Activated T-helper 2 cell treated with anti-CD3 and anti-CD28 coated beads, Interferon-gamma antibody, Interleukin-2, Interleukin-4, amounts not matched to agents 10 μg/mL and 5 μg/mL and 100 μg/mL, durations not matched to agents 14 hours and 24 hours and 36 hours (primary cell): ENCODE measurements at regions of chr17 and their contacts with region 1.

Region 1: GRCh38 chr17:39225959-39226683 is 376 bp upstream of the STAC2 start:
- DNase-seq: no peak
- H3K4me3 Mint-ChIP-seq: peak overlapping the region; percentile 37
- H3K27ac Mint-ChIP-seq: no peak overlapping the region
- H3K4me1 Mint-ChIP-seq: peaks cover 3% of the 10 kb centered on the region
- H3K27me3 Mint-ChIP-seq: peaks cover 46% of the 10 kb centered on the region

Region 2: DNA sequence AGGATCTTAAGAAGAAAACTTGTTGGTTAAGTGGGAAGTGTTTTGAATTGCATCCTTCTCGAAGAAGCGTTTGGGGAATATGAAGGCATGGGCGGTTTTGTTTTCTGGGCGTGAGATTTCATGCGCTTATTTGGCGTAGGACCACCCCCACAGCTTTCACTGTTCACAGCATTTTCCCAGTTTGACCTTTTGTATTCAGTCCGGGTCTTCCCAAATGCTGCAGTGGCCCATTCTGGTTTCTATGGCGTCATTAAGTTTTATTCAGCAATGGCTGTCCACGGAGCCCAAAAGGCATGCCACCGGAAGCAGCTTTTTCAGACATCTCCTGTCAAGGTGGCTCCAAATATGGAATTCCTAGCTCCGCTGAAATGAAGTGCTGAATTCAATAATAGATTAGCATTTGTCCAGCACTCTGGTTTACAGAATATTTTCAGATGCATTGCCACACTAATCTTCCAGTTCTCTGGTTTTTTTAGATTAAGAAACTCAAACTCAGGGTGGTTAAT is 168.4 kb before region 1 on chr17:
- intact Hi-C with region 1: no loop called
- DNase-seq: no peak
- H3K4me3 Mint-ChIP-seq: peak overlapping the region; percentile 75
- H3K27ac Mint-ChIP-seq: no peak overlapping the region
- H3K4me1 Mint-ChIP-seq: peaks cover 12% of the 10 kb centered on the region
- H3K27me3 Mint-ChIP-seq: peaks cover 6% of the 10 kb centered on the region

Region 3: GRCh38 chr17:39069114-39069756 is 156.9 kb before region 1 on chr17:
- intact Hi-C with region 1: no loop called
- DNase-seq: no peak
- H3K4me3 Mint-ChIP-seq: no peak overlapping the region
- H3K27ac Mint-ChIP-seq: no peak overlapping the region
- H3K4me1 Mint-ChIP-seq: peaks cover 10% of the 10 kb centered on the region
- H3K27me3 Mint-ChIP-seq: peaks cover 2% of the 10 kb centered on the region

Region 4: DNA sequence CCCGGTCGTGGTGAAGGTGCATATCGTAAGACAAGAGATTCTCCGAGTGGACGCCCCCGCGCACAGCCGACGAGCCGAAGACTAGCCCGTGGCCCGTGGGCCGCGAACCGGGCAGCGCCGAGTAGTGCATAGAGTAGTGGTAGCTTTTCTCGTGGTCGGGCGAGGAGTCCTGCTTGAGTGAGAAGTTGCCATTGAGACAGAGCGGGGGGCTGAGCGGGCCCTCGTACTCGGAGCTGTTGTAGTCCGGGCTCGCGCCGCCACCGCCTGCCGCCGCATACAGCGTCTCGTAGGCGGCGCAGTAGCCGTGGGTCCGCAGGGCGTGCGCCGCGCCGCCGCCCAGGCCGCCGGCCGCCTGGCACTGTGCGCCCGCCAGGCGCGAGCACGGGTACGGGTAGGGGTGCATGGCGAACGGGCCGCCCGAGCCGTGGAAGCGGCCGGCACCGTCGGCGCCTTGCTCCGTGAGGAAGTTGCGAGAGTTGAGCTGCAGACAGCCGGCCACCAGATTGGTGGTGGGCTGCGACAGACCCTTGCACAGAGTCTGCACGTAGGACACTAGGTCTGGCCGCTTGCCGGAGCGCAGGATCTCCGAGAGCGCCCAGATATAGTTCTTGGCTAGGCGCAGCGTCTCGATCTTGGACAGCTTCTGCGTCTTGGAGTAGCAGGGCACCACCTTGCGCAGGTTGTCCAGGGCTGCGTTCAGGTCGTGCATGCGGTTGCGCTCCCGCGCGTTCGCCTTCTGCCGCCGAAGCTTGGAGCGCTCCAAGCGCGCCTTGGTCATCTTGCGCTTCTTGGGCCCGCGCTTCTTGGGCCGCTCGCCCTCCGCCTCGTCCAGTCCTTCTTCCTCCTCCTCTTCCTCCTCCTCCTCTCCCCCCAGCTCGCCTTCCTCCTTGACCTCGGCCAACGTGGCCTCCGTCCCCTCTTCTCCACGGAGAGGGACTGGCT is 379.6 kb after region 1 on chr17:
- intact Hi-C with region 1: loop called (anchors 10 kb)
- DNase-seq: no peak
- H3K4me3 Mint-ChIP-seq: no peak overlapping the region
- H3K27ac Mint-ChIP-seq: no peak overlapping the region
- H3K4me1 Mint-ChIP-seq: peaks cover 10% of the 10 kb centered on the region
- H3K27me3 Mint-ChIP-seq: peaks cover 64% of the 10 kb centered on the region